Activated CD4-positive, alpha-beta T cell treated with anti-CD3 and anti-CD28 coated beads, Interleukin-2, amount 10 ng/mL, durations not matched to agents 24 days and 14 days (primary cell): ENCODE measurements at regions of chr6 and their contacts with region 1.

Region 1: DNA sequence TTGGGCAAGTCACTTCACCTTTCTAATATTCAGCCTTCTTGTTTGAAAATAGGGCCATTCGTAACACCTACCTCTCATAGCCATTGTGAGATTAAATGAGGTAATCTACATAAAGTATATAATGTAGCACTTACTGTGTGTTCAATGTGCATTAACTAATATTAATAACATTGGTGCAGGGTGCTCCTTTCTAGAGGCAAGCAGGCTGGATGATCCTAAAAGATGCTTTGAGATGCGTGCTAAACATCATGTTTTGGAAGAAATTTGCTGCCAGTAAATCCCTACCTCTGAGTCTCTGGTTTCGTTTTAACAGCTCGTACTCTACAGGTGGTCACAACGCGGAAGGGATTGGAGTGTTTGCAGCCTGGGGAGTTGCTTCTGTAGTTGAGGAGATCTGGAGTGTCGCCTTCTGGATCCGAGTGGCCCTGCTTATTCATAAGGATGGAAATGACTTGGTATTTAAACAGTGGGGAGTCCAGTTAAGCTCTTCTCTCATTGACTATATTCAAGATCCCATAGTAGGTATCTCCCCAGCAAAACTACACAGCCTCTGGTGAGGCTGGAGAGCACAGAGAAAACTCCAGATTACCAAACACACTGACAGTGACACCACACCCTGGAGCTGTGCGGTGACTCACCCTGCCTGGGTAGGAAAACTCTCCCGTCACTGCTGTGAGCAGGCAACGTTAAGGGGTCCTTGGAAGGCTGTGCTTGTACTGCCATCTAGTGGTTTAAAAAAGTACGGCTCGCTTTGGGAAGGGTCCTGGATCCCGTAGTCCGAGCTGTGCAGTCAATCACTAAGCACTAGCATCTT is 107.9 kb downstream of the MAP3K7 start:
- DNase-seq: peak; percentile 95
- H3K4me3 Mint-ChIP-seq: peak overlapping the region; percentile 48
- H3K27ac Mint-ChIP-seq: peak overlapping the region; percentile 71
- H3K4me1 Mint-ChIP-seq: peaks cover 51% of the 10 kb centered on the region
- H3K27me3 Mint-ChIP-seq: no peaks in the 10 kb centered on the region

Region 2: GRCh38 chr6:89940225-89941027 is 538.6 kb before region 1 on chr6:
- intact Hi-C with region 1: loop called (anchors 1 kb)
- DNase-seq: peak; percentile 91
- H3K4me3 Mint-ChIP-seq: no peak overlapping the region
- H3K27ac Mint-ChIP-seq: peak overlapping the region; percentile 41
- H3K4me1 Mint-ChIP-seq: peaks cover 34% of the 10 kb centered on the region
- H3K27me3 Mint-ChIP-seq: no peaks in the 10 kb centered on the region

Region 3: DNA sequence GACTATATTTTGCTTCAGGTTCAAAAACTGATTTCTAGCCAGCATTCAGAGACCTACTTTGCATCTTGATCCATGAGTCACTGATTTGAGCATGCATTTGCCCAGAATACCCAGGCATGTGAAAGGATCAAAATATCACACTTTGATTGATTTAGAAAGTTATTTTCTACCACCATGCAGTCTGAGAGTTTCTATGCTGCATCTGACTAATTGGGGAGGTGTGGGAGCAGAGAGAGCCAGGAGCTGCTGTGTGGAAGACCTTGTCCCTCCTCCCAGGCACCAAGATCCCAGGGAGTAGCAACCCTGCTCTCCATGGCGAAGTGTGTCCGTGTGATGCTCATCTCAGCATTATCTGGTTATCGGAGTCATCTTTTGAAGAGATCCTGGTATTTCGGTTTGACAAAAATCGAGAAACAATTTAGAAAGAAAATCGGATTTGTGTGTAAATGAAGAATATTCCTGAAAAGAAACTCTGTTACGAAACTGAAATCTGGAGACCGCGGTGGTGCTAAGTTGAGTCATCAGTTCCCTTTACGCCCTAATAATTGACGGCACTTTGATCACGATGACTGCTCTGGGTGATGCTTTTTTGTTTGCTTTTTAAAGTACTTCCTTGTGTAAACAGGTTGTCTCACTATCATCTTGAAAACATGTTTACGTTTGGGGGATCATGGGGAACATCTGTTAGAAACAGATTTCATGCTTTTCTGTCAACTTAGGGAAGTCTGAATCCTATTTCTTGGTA is 375.8 kb before region 1 on chr6:
- intact Hi-C with region 1: loop called (anchors 5 kb)
- DNase-seq: peak; percentile 73
- H3K4me3 Mint-ChIP-seq: peak overlapping the region; percentile 64
- H3K27ac Mint-ChIP-seq: peak overlapping the region; percentile 88
- H3K4me1 Mint-ChIP-seq: peaks cover 60% of the 10 kb centered on the region
- H3K27me3 Mint-ChIP-seq: no peaks in the 10 kb centered on the region

Region 4: DNA sequence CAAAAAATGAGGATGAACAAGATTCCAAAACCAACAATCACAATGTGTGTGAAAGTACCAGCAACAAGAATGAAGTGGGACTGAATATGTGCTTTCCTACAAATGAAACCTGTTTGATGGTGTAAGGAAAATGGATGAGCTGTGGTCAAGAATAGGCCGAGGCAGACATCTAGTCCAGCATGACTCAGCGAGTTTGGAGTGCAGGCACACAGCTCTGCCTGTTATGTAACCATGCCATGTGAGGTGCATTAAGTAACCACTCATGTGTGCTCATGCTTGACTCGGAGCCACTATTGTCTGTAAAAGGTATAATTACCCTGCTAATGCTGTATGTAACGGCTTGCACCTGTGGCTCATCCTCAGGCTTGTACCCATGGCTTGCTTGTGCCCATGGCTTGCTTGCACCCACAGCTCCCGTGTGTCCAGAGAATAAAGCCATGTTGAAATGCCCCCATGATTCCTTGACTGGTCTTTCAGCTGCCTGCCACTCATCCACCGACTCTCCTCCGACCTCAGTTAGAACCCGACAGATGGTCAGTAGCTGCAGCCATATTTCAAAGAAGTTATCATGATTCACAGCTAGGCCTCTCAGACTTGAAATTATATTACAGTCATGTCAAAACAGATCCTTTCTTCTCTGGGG is 281.0 kb before region 1 on chr6:
- intact Hi-C with region 1: loop called (anchors 5 kb)
- DNase-seq: peak; percentile 58
- H3K4me3 Mint-ChIP-seq: no peak overlapping the region
- H3K27ac Mint-ChIP-seq: no peak overlapping the region
- H3K4me1 Mint-ChIP-seq: peaks cover 47% of the 10 kb centered on the region
- H3K27me3 Mint-ChIP-seq: no peaks in the 10 kb centered on the region

Region 5: GRCh38 chr6:90296346-90297114 is 182.5 kb before region 1 on chr6 and contains the start of gene BACH2:
- intact Hi-C with region 1: loop called (anchors 2 kb)
- DNase-seq: peak; percentile 97
- H3K4me3 Mint-ChIP-seq: peak within 1 kb of the TSS; percentile 94
- H3K27ac Mint-ChIP-seq: peak within 1 kb of the TSS; percentile 95
- H3K4me1 Mint-ChIP-seq: peaks cover 40% of the 10 kb centered on the region
- H3K27me3 Mint-ChIP-seq: peaks cover 23% of the 10 kb centered on the region
- total RNA-seq, gene BACH2: 69.0 and 69.2 TPM in 2 replicates

Region 6: DNA sequence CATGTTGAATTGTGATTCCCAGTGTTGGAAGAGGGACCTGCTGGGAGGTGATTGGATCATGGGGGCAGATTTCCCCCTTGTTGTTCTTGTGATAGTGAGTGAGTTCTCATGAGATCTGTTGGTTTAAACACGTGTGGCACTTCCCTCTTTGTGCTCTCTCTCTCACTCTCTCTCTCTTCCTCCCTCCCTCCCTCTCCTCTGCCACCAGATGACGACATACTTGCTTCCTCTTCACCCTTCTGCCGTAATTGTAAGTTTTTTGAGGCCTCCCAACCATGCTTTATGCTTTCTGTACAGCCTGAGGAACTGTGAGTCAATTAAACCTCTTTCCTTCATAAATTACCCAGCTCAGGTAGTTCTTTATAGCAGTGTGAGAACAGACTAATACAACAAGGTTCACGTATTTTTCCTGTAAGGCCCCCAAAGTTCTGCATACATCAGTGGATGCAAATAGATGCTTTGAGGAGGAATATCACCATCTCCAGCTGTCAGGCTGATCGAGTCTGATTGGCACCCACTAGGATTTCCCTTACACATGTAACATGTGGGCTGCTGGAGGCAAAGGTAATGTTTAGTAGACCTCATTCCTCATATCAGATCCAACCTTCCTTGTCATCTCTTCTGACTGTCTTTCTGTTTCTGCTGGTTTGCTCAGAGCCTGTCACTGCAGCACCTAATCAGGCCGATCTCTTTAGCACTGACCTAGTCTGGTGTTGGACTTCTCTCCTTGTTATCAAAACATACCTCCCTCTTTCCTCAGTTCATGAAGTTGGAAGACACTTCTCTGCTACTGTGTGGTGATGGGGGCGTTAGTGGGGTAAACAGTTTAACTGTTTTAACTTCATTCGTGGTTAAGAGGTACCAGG is 128.1 kb before region 1 on chr6:
- intact Hi-C with region 1: loop called (anchors 2 kb)
- DNase-seq: peak; percentile 83
- H3K4me3 Mint-ChIP-seq: peak overlapping the region; percentile 42
- H3K27ac Mint-ChIP-seq: peak overlapping the region; percentile 90
- H3K4me1 Mint-ChIP-seq: peaks cover 37% of the 10 kb centered on the region
- H3K27me3 Mint-ChIP-seq: peaks cover 5% of the 10 kb centered on the region

Region 7: GRCh38 chr6:90466154-90466940 is 12.6 kb before region 1 on chr6:
- intact Hi-C with region 1: loop called (anchors 1 kb)
- DNase-seq: peak; percentile 82
- H3K4me3 Mint-ChIP-seq: peak overlapping the region; percentile 46
- H3K27ac Mint-ChIP-seq: peak overlapping the region; percentile 90
- H3K4me1 Mint-ChIP-seq: peaks cover 80% of the 10 kb centered on the region
- H3K27me3 Mint-ChIP-seq: no peaks in the 10 kb centered on the region

Region 8: DNA sequence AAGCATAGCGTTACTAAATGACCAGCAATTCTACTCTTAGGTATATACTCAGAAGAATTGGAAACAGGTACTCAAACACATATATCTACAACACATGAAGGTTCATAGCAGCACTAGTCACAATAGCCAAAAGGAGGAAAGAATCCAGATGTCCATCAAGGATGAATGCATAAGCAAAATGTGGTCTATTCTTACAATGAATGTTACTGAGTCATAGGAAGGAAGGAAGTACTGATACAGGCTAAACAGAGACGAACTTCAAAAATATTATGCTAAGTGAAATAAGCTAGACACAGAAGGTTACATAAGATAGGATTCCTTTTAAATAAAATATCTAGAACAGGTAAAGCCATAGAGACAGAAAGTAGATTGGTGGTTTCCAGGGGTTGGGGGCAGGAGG is 14.3 kb after region 1 on chr6:
- intact Hi-C with region 1: no loop called
- DNase-seq: peak; percentile 16
- H3K4me3 Mint-ChIP-seq: no peak overlapping the region
- H3K27ac Mint-ChIP-seq: no peak overlapping the region
- H3K4me1 Mint-ChIP-seq: peaks cover 13% of the 10 kb centered on the region
- H3K27me3 Mint-ChIP-seq: peaks cover 29% of the 10 kb centered on the region